ENCODE measurements at regions of chr16 and their contacts with region 1.

Region 1: GRCh38 chr16:85688586-85689284 is at the start of gene GINS2:
- DNase-seq: peak; percentile 84 to 89
- H3K4me3 ChIP-seq: peak within 1 kb of the TSS; percentile 82
- H3K27ac ChIP-seq: no peak within 1 kb of the TSS
- H3K4me1 ChIP-seq: 0 out of 2 replicates have a peak, but pooled peaks cover 5% of the 10 kb centered on the region
- H3K27me3 ChIP-seq: no peaks in the 10 kb centered on the region
- CTCF ChIP-seq: no peak
- total RNA-seq, gene GINS2: 18.4 and 20.2 TPM in 2 replicates

Region 2: GRCh38 chr16:85498273-85499006 is 190.3 kb before region 1 on chr16:
- CTCF ChIA-PET with region 1: interaction called, 13 read pairs
- POLR2A ChIA-PET with region 1: no interaction called
- intact Hi-C with region 1: no loop called
- DNase-seq: no peak
- H3K4me3 ChIP-seq: no peak overlapping the region
- H3K27ac ChIP-seq: no peak overlapping the region
- H3K4me1 ChIP-seq: no peaks in the 10 kb centered on the region; the same call in 1 of the 2 replicates
- H3K27me3 ChIP-seq: no peaks in the 10 kb centered on the region
- CTCF ChIP-seq: no peak

Region 3: DNA sequence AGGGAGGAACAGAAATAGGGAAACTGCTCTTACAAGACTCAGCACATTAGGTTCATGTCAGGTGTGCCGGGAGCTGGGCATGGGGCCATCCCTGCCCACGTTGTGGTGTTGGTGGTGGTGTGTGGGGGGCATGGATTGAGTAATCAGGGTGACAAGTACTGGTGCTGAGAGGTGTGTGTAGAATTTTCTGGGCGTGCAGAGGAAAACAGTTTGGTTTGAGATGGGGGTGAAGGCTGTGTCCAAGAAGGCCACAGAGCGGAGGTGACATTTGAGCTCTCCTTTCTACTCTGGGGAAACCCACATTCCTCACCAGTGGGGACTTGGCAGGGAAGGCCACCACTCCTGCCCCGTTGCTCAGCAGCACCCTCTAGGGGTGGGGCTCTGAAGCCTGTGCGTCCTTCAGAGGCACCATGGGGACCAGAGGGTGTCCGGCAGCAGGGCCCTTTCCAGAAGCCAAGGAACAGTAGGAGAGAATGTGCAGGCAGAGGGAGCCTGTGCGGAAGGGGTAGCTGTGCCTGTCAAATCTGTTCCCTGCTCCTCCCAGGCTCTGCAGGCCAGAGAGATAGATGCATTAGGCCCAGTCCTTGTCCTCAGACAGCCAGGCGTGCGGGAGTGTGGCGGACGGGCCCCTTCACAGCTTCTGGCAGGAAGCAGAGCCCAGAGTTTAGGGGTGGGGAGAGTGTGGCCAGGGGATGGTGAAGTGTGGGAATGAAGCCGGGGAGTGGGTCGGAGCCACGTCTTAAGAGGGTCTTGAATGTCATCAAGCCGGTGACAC is 124.3 kb before region 1 on chr16:
- CTCF ChIA-PET with region 1: no interaction called
- POLR2A ChIA-PET with region 1: no interaction called
- intact Hi-C with region 1: no loop called
- DNase-seq: peak in 1 of 2 experiments; percentile 31
- H3K4me3 ChIP-seq: no peak overlapping the region
- H3K27ac ChIP-seq: no peak overlapping the region
- H3K4me1 ChIP-seq: peaks cover 41% of the 10 kb centered on the region
- H3K27me3 ChIP-seq: no peaks in the 10 kb centered on the region
- CTCF ChIP-seq: peak; percentile 78

Region 4: DNA sequence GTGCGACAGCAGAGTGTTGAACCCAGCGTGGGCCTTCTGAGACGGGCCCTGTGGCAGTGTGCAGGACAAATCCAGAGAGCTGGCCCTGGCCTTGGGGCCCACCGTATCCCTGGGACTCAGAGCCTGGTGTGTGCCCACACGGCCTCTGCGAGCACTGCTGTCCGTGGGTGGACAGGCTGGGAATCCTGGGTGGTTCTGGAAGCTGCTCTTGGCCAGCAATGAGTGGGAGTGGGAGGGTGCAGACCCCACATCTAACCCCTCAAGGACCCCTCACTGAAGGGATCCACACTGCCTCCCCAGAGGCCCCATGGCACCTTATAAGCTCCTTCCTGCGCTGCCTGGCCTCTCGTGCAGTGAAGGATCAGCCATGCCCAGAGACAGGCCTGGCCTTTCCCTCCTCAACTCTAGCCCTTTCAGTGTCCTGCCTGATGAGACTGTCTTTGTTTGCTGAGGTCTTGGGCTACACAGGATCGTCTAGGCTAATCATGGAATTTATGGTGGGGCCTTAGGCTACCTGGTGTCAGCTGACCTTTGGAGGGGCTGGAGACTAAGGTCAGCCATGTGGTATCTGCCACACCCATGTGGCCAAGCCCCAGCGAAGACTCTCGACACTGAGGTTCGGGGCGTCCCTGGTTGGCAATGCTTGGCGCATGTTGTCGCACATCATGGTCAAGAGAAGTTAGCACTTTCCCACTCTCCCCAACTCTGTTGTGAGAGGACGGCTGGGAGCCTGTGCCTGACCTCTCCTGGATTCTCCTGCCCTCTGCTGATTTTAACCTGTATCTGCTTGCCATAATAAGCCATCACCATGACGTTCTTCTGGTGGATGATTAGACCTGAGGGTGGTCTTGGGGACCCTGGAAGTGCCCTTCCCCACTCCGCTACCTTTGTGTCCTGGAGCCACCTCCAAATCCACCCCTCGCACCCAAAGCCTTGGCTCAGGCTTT is 16.4 kb after region 1 on chr16:
- CTCF ChIA-PET with region 1: no interaction called
- POLR2A ChIA-PET with region 1: no interaction called
- intact Hi-C with region 1: no loop called
- DNase-seq: no peak
- H3K4me3 ChIP-seq: no peak overlapping the region
- H3K27ac ChIP-seq: no peak overlapping the region
- H3K4me1 ChIP-seq: no peaks in the 10 kb centered on the region
- H3K27me3 ChIP-seq: no peaks in the 10 kb centered on the region
- CTCF ChIP-seq: no peak

Region 5: GRCh38 chr16:85715169-85716015 is 26.7 kb after region 1 on chr16:
- CTCF ChIA-PET with region 1: interaction called, 10 read pairs
- POLR2A ChIA-PET with region 1: interaction called, 3 read pairs
- intact Hi-C with region 1: no loop called
- DNase-seq: no peak
- H3K4me3 ChIP-seq: no peak overlapping the region
- H3K27ac ChIP-seq: no peak overlapping the region
- H3K4me1 ChIP-seq: peaks cover 8% of the 10 kb centered on the region; the same call in 1 of the 2 replicates
- H3K27me3 ChIP-seq: no peaks in the 10 kb centered on the region
- CTCF ChIP-seq: no peak

Region 6: DNA sequence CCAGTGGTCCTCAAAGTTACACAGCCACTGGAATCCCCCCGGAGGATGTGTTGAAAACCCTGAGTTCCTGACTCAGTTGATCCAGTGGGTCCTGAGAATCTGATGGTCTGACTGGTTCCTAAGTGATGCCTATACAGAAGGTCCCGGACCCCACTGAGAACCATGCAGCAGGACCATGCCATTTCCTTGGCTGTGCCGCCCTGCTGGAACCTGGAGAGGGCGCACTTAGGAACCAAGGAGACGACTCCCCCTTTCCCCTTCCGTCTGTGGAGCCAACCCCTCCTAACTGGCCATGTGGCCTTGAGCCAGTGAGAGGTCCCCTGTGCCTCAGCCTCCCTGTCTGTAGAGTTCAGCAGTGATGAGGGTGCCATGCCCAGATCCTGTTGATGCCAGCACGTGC is 40.1 kb after region 1 on chr16:
- CTCF ChIA-PET with region 1: interaction called, 14 read pairs
- POLR2A ChIA-PET with region 1: no interaction called
- intact Hi-C with region 1: no loop called
- DNase-seq: no peak
- H3K4me3 ChIP-seq: no peak overlapping the region
- H3K27ac ChIP-seq: no peak overlapping the region
- H3K4me1 ChIP-seq: peaks cover 9% of the 10 kb centered on the region; the same call in 1 of the 2 replicates
- H3K27me3 ChIP-seq: no peaks in the 10 kb centered on the region
- CTCF ChIP-seq: peak; percentile 38; the same call in 1 of the 2 replicates

Measured in PC-9 (cell line).